Breast epithelium (tissue), 4 donors: ENCODE measurements at regions of chr15 and their contacts with region 1.

Region 1: GRCh38 chr15:34708422-34708821 is 46.4 kb downstream of the GJD2 start:
- DNase-seq: no peak
- H3K4me3 ChIP-seq: no peak overlapping the region
- H3K27ac ChIP-seq: no peak overlapping the region
- H3K4me1 ChIP-seq: no peaks in the 10 kb centered on the region
- H3K27me3 ChIP-seq: peaks cover 0 to 4% of the 10 kb centered on the region in 2 donors
- CTCF ChIP-seq: peak in 2 of 3 donors; percentile 19 to 43
- POLR2A ChIP-seq: no peak

Region 2: GRCh38 chr15:34861214-34861613 is 152.8 kb after region 1 on chr15:
- intact Hi-C with region 1: loop called (anchors 5 kb)
- DNase-seq: no peak
- H3K4me3 ChIP-seq: no peak overlapping the region
- H3K27ac ChIP-seq: no peak overlapping the region
- H3K4me1 ChIP-seq: no peaks in the 10 kb centered on the region
- H3K27me3 ChIP-seq: no peaks in the 10 kb centered on the region
- CTCF ChIP-seq: no peak
- POLR2A ChIP-seq: no peak

Region 3: GRCh38 chr15:35054380-35054779 is 346.0 kb after region 1 on chr15:
- intact Hi-C with region 1: no loop called
- DNase-seq: no peak
- H3K4me3 ChIP-seq: no peak overlapping the region
- H3K27ac ChIP-seq: no peak overlapping the region
- H3K4me1 ChIP-seq: no peaks in the 10 kb centered on the region
- H3K27me3 ChIP-seq: no peaks in the 10 kb centered on the region
- CTCF ChIP-seq: no peak
- POLR2A ChIP-seq: no peak